ENCODE measurements at regions of chr12 and their contacts with region 1.

Region 1: GRCh38 chr12:54053751-54054741 is at the start of gene HOXC4:
- DNase-seq: no peak
- H3K4me3 Mint-ChIP-seq: peak within 1 kb of the TSS; percentile 71
- H3K27ac Mint-ChIP-seq: peak within 1 kb of the TSS; percentile 63
- H3K4me1 Mint-ChIP-seq: peaks cover 22% of the 10 kb centered on the region
- H3K27me3 Mint-ChIP-seq: peaks cover 88% of the 10 kb centered on the region
- total RNA-seq, gene HOXC4: not detected in 2 replicates

Region 2: GRCh38 chr12:53344824-53345485 is 709.1 kb before region 1 on chr12:
- intact Hi-C with region 1: no loop called
- DNase-seq: peak; percentile 89
- H3K4me3 Mint-ChIP-seq: peak overlapping the region; percentile 92
- H3K27ac Mint-ChIP-seq: peak overlapping the region; percentile 90
- H3K4me1 Mint-ChIP-seq: peaks cover 24% of the 10 kb centered on the region
- H3K27me3 Mint-ChIP-seq: peaks cover 5% of the 10 kb centered on the region

Region 3: DNA sequence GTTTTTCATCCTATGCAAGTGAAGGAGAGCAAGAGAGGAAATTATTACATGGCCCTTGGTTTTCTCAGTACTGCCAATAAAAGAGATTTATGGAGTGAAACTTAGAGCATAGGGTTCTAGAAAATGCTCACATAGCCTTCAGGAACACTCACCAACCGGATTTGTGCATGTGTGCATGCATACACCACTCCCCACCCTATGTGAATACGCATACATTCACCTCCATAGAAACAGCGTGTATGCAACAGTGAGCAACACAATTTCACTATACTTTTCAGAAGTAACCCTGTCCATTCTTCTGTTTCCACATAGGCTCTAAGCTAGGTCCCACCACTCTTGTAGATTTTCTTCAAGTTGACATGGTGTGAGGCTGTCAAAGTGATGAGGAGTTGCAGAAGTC is 146.9 kb before region 1 on chr12:
- intact Hi-C with region 1: no loop called
- DNase-seq: no peak
- H3K4me3 Mint-ChIP-seq: no peak overlapping the region
- H3K27ac Mint-ChIP-seq: no peak overlapping the region
- H3K4me1 Mint-ChIP-seq: no peaks in the 10 kb centered on the region
- H3K27me3 Mint-ChIP-seq: peaks cover 26% of the 10 kb centered on the region

Region 4: GRCh38 chr12:53928054-53928835 is 125.8 kb before region 1 on chr12:
- intact Hi-C with region 1: loop called (anchors 5 kb)
- DNase-seq: no peak
- H3K4me3 Mint-ChIP-seq: no peak overlapping the region
- H3K27ac Mint-ChIP-seq: no peak overlapping the region
- H3K4me1 Mint-ChIP-seq: no peaks in the 10 kb centered on the region
- H3K27me3 Mint-ChIP-seq: peaks cover 90% of the 10 kb centered on the region

Region 5: DNA sequence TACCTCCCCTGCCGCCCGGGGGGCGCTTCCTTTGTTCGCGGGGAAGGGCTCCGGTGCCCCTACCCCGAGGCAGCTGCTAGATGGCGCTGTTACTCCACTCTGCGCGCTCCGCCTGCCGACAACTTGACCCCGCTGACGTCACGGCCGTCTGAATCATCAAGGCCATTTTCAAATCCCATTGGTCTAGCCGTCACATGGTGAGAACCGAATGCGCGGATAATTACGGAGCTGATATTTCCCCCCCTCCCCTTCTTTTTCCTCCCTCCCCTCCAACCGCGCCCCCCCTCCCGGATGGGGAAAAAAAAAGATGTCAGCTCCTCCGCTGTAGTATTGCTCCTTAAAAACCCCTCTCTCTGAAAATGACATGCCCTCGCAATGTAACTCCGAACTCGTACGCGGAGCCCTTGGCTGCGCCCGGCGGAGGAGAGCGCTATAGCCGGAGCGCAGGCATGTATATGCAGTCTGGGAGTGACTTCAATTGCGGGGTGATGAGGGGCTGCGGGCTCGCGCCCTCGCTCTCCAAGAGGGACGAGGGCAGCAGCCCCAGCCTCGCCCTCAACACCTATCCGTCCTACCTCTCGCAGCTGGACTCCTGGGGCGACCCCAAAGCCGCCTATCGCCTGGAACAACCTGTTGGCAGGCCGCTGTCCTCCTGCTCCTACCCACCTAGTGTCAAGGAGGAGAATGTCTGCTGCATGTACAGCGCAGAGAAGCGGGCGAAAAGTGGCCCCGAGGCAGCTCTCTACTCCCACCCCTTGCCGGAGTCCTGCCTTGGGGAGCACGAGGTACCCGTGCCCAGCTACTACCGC is 68.9 kb before region 1 on chr12 and contains the start of gene HOXC10:
- intact Hi-C with region 1: no loop called
- DNase-seq: peak; percentile 90
- H3K4me3 Mint-ChIP-seq: peak within 1 kb of the TSS; percentile 59
- H3K27ac Mint-ChIP-seq: peak within 1 kb of the TSS; percentile 81
- H3K4me1 Mint-ChIP-seq: peaks cover 24% of the 10 kb centered on the region
- H3K27me3 Mint-ChIP-seq: peaks cover 92% of the 10 kb centered on the region
- total RNA-seq, gene HOXC10: not detected in 2 replicates

Region 6: GRCh38 chr12:53995378-53996239 is 58.4 kb before region 1 on chr12:
- intact Hi-C with region 1: loop called (anchors 5 kb)
- DNase-seq: peak; percentile 74
- H3K4me3 Mint-ChIP-seq: peak overlapping the region; percentile 75
- H3K27ac Mint-ChIP-seq: no peak overlapping the region
- H3K4me1 Mint-ChIP-seq: peaks cover 18% of the 10 kb centered on the region
- H3K27me3 Mint-ChIP-seq: peaks cover 87% of the 10 kb centered on the region

Region 7: DNA sequence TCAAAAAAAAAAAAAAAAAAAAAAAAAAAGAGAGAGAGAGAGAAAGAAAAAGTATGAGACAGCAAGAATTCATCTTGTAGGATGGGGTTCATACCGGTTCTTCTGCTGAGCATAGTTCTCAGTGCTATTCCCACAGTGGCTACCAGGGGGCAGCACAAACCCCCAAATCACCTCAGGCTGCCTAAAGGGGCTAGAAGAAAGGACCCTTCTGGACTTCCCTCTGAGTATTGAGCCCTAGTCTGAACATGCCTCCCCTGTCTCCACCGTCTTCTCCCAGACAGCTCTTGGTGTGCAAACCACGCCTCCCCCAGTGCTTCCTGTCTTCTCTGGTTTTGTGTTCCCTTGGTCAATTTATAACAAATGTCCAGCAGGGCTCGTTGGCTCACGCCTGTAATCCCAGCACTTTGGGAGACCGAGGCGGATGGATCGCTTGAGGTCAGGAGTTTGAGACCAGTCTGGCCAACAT is 166.1 kb after region 1 on chr12:
- intact Hi-C with region 1: no loop called
- DNase-seq: peak; percentile 90
- H3K4me3 Mint-ChIP-seq: peak overlapping the region; percentile 12
- H3K27ac Mint-ChIP-seq: no peak overlapping the region
- H3K4me1 Mint-ChIP-seq: peaks cover 21% of the 10 kb centered on the region
- H3K27me3 Mint-ChIP-seq: peaks cover 11% of the 10 kb centered on the region

Measured in activated CD4-positive, alpha-beta T cell treated with anti-CD3 and anti-CD28 coated beads, Interleukin-2, amount 10 ng/mL, durations not matched to agents 24 days and 14 days (primary cell).